Common myeloid progenitor, CD34-positive (primary cell): ENCODE measurements at regions of chr3 and their contacts with region 1.

Region 1: GRCh38 chr3:12822725-12823373 is 18.5 kb downstream of the RPL32 start:
- DNase-seq: peak in 2 of 3 donors; percentile 43 to 57
- H3K4me3 ChIP-seq: no peak overlapping the region
- H3K27ac ChIP-seq: no peak overlapping the region
- H3K4me1 ChIP-seq: peaks cover 0 to under 1% (median 0%) of the 10 kb centered on the region in 4 experiments
- H3K27me3 ChIP-seq: no peaks in the 10 kb centered on the region

Region 2: DNA sequence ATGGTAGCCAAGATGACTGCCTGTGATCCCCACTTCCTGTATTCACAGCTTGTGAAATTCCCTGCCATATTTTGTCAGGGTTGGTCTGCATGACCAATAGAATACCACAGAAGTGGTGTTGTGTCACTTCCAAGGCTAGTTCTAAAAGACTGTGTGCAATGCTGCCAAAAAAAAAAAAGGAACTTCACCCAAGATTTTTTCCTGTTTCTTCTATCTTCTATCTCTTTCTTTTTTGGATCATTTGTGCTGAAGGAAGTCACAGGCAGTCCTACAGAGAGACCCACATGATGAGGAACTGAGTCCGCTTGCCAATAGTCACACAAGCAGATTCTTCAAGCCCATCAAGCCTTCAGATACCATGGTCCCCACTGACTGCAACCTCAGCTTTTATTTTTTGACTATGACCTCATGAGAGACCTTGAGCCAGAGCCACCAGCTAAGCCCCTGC is 140.9 kb before region 1 on chr3:
- CTCF ChIA-PET with region 1: no interaction called
- POLR2A ChIA-PET with region 1: no interaction called
- DNase-seq: peak; percentile 43 to 86 (median 81)
- H3K4me3 ChIP-seq: no peak overlapping the region
- H3K27ac ChIP-seq: peak overlapping the region in 1 of 2 experiments; percentile 6
- H3K4me1 ChIP-seq: peaks cover 0 to 13% (median 9%) of the 10 kb centered on the region in 4 experiments
- H3K27me3 ChIP-seq: no peaks in the 10 kb centered on the region

Region 3: DNA sequence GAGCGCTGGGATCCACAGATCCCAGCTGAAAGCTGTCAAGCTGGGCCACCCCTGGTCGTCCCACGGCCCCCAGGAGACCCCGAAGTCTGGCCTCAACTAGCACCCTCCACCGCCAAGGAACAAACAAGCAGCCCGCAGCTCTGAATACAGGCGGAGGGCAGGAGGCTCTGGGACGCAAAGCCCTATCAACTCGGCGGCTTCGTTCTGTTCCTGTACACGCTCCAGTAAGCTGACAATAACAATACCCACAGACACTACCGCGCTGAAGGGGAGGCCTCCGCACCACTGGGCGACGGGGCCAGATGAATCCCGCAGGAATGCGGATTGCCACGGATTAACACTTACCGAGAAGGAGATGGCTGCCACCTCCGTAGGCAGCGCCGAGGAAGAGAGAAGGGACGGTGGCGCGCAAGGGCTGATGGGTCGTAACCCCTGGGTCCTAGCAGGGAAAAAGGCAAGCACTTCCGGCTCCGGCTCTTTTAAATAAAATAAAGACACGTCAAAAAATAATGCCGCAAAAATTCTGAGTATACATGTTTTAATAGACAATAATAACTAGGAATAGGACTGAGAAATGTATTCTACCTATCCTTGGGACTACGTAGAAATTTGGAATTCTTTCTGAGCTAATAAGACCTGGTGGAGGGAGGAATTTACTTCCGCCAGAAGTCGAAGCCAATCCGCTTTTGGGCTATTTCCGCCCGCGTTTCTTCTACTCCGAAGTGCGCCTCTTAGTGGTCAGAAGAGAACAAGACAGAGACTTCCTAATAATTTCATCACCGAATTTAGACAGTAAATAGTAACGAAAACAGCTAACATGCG is 18.5 kb after region 1 on chr3 and contains the start of gene RPL32:
- CTCF ChIA-PET with region 1: interaction called, 19 read pairs
- POLR2A ChIA-PET with region 1: interaction called, 4 read pairs
- DNase-seq: peak; percentile 98 to 99 (median 99)
- H3K4me3 ChIP-seq: peak within 1 kb of the TSS; percentile 86 to 100 (median 92)
- H3K27ac ChIP-seq: peak within 1 kb of the TSS; percentile 99 to 100
- H3K4me1 ChIP-seq: peaks cover 4 to 31% (median 24%) of the 10 kb centered on the region in 4 experiments
- H3K27me3 ChIP-seq: no peaks in the 10 kb centered on the region

Region 4: DNA sequence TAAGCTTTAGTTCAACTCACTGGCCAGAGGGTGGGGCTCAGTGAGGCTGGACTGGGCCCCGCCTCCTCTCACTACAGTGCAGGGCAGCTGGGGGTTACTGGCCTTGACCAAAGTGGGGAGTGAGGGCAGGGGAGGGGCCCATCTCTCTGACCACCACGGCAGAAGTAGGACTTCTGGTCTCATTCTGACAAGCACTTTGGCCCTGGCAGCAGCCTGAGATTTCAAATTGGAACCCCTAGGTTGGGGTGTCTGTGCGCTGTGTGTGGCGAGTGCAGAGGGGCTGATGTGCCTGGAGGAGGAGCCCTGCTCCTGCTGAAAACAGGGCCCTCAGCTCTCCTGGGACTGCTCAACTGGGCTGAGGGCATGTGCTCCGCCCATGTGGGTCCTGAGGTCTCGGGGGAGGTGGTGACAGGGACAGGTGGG is 78.8 kb after region 1 on chr3:
- CTCF ChIA-PET with region 1: no interaction called
- POLR2A ChIA-PET with region 1: no interaction called
- DNase-seq: peak in 2 of 3 donors; percentile 26 to 36
- H3K4me3 ChIP-seq: no peak overlapping the region
- H3K27ac ChIP-seq: no peak overlapping the region
- H3K4me1 ChIP-seq: peaks cover 0 to 27% (median 24%) of the 10 kb centered on the region in 4 experiments
- H3K27me3 ChIP-seq: no peaks in the 10 kb centered on the region

Region 5: GRCh38 chr3:12999147-13000140 is 176.6 kb after region 1 on chr3:
- CTCF ChIA-PET with region 1: no interaction called
- POLR2A ChIA-PET with region 1: no interaction called
- DNase-seq: peak in 2 of 3 donors; percentile 64 to 69
- H3K4me3 ChIP-seq: no peak overlapping the region
- H3K27ac ChIP-seq: peak overlapping the region in 1 of 2 experiments; percentile 72
- H3K4me1 ChIP-seq: peaks cover 18 to 31% (median 25%) of the 10 kb centered on the region in 4 experiments
- H3K27me3 ChIP-seq: peaks cover 0 to 3% (median 0%) of the 10 kb centered on the region in 5 experiments

Region 6: GRCh38 chr3:13027154-13027553 is 204.3 kb after region 1 on chr3:
- CTCF ChIA-PET with region 1: no interaction called
- POLR2A ChIA-PET with region 1: no interaction called
- DNase-seq: no peak
- H3K4me3 ChIP-seq: no peak overlapping the region
- H3K27ac ChIP-seq: no peak overlapping the region
- H3K4me1 ChIP-seq: no peaks in the 10 kb centered on the region
- H3K27me3 ChIP-seq: no peaks in the 10 kb centered on the region